Right ventricle myocardium inferior (tissue), 1 donor: ENCODE measurements at regions of chr2 and their contacts with region 1.

Region 1: GRCh38 chr2:71778936-71779773 is 325.8 kb downstream of the DYSF start:
- DNase-seq: no peak
- ATAC-seq: no peak

Region 2: GRCh38 chr2:71716781-71717624 is 62.2 kb before region 1 on chr2:
- intact Hi-C with region 1: loop called (anchors 2 kb)
- DNase-seq: peak; percentile 92
- ATAC-seq: peak; percentile 96

Region 3: DNA sequence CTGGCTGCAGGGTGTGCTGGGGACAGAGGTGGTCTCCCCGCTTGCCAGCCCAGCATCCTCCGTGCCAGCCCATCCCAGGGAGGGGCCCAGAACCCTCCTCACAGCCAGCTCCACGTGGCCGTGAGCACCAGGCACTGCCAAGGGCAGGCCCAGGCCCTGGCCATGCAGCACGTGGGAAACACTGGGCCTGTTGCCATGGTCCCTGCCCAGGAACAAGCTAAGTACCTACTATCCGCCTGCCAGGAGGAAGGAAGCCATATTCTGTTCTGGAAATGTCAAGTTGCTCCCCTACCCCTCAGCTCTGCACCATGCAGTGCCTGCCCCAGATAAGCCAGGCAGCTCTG is 118.0 kb after region 1 on chr2:
- intact Hi-C with region 1: no loop called
- DNase-seq: peak; percentile 71
- ATAC-seq: peak; percentile 89